H1 (cell line): ENCODE measurements at regions of chr3 and their contacts with region 1.

Region 1: DNA sequence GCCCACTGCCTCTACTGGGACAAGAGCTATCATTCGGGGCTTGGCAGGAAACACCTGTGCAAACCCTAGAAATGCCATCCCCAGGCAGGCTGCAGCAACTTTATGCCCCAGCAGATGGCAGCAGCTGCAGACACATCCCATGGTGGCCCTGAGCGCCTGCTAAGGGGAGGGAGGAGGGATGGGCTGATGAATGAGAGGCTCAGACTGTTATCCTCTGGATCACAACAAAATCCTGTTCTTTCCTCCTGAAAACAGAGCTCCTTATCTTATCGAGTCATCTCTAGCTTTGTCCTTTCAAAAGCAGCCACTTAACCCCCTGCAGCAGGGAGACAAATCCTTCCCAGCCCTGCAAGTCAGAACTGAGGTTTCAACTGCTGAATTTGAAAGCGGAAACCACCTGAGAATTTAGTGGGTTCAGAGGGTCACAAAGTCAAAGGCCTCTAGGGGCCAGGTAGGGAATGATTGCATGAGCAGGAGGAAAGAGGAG is 90.6 kb upstream of the PROK2 start:
- DNase-seq: peak; percentile 88 to 94
- H3K4me3 ChIP-seq: no peak overlapping the region
- H3K27ac ChIP-seq: no peak overlapping the region
- H3K4me1 ChIP-seq: peaks cover 1 to 13% (median 3%) of the 10 kb centered on the region in 4 experiments; a peak in 5 of 7 replicates
- H3K27me3 ChIP-seq: no peaks in the 10 kb centered on the region
- CTCF ChIP-seq: peak; percentile 82 to 96 (median 96)
- EP300 ChIP-seq: no peak; a peak in 1 of 3 replicates
- POLR2A ChIP-seq: no peak
- RAD21 ChIP-seq: peak; percentile 90

Region 2: GRCh38 chr3:71725279-71725991 is 150.1 kb before region 1 on chr3 and contains the start of gene EIF4E3:
- CTCF ChIA-PET with region 1: interaction called, 20 read pairs
- POLR2A ChIA-PET with region 1: interaction called, 10 read pairs
- DNase-seq: peak in 1 of 2 experiments; percentile 72
- H3K4me3 ChIP-seq: peak within 1 kb of the TSS; percentile 67 to 84 (median 76)
- H3K27ac ChIP-seq: peak within 1 kb of the TSS; percentile 20; the same call in 1 of the 2 replicates
- H3K4me1 ChIP-seq: peaks cover 8 to 24% (median 10%) of the 10 kb centered on the region in 4 experiments
- H3K27me3 ChIP-seq: peaks cover 3 to 19% (median 16%) of the 10 kb centered on the region in 4 experiments
- CTCF ChIP-seq: no peak
- EP300 ChIP-seq: no peak
- POLR2A ChIP-seq: no peak
- RAD21 ChIP-seq: no peak
- total RNA-seq, gene EIF4E3: 14.3 and 17.0 TPM in 2 replicates

Region 3: GRCh38 chr3:71891483-71891882 is 16.0 kb after region 1 on chr3:
- CTCF ChIA-PET with region 1: interaction called, 23 read pairs
- POLR2A ChIA-PET with region 1: interaction called, 4 read pairs
- DNase-seq: no peak
- H3K4me3 ChIP-seq: no peak overlapping the region
- H3K27ac ChIP-seq: no peak overlapping the region
- H3K4me1 ChIP-seq: peaks cover 3 to 7% (median 5%) of the 10 kb centered on the region in 4 experiments; a peak in 4 of 7 replicates
- H3K27me3 ChIP-seq: no peaks in the 10 kb centered on the region
- CTCF ChIP-seq: no peak
- EP300 ChIP-seq: no peak
- POLR2A ChIP-seq: no peak
- RAD21 ChIP-seq: no peak

Region 4: DNA sequence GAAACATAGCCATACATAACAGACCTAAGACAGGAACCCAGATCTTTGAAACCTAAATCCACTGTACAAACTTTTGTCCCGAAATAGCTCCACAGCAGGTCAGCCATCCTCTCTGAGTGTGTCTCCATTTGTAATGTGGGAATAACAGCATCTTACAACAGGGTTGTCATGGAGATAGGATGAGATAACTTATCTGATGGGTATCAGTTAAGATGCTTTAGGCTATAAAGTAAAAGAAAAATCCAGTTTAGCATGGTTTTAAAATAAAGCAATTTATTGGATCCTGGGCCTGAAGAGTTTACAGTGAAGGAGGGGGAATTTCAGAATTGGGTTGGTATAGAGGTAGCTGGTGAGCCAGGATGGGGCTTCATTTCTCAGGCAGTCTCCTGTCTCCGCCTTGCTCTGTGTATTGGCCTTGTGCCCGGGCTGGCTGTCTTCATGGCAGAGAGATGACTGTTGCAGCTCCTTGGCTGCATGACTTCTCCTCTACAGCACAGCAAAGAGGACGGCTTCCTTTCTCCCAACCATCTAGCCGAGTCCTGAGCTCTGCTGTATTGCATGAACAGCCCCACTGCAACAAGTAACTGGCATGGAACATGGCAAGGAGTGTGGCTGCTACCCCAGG is 41.4 kb after region 1 on chr3:
- CTCF ChIA-PET with region 1: interaction called, 13 read pairs
- POLR2A ChIA-PET with region 1: no interaction called
- DNase-seq: no peak
- H3K4me3 ChIP-seq: no peak overlapping the region
- H3K27ac ChIP-seq: no peak overlapping the region
- H3K4me1 ChIP-seq: no peaks in the 10 kb centered on the region
- H3K27me3 ChIP-seq: no peaks in the 10 kb centered on the region
- CTCF ChIP-seq: no peak
- EP300 ChIP-seq: no peak
- POLR2A ChIP-seq: no peak
- RAD21 ChIP-seq: no peak

Region 5: DNA sequence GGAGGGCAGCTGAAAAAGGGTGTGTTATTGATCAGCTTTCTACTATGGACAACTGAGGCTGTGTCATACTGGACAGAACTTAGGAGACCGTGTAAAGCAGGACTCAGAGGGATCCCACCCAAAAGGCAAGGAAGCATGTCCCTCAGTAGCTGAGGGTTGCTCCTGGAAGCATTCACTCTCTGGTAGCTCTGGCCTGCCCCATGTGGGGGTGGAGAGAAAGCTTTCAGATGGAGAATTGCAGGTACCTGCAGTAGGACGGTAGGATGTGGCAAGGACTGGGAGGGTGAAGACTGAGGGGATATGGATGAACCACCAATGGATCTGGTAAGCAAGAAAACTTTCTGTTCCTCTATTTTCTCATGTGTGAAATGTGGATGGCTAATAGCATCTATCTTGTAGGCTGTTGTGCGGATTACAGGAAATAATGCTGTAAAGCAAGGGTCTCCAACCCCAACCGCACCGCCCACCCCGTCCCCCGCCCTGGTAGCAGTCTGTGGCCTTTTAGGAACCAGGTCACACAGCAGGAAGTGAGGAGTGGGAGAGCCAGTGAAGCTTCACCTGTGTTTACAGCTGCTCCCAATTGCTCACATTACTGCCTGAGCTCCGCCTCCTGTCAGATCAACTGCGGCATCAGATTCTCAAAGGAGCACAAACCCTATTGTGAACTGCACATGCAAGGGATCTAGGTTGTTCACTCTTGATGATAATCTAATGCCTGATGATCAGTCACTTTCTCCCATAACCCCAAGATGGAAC is 67.1 kb after region 1 on chr3:
- CTCF ChIA-PET with region 1: interaction called, 28 read pairs
- POLR2A ChIA-PET with region 1: no interaction called
- DNase-seq: no peak
- H3K4me3 ChIP-seq: no peak overlapping the region
- H3K27ac ChIP-seq: no peak overlapping the region
- H3K4me1 ChIP-seq: peaks cover 0 to 3% (median 1%) of the 10 kb centered on the region in 4 experiments; a peak in 1 of 7 replicates
- H3K27me3 ChIP-seq: peaks cover 0 to 1% (median 0%) of the 10 kb centered on the region in 4 experiments; a peak in 1 of 7 replicates
- CTCF ChIP-seq: peak; percentile 40 to 59 (median 50); a peak in 3 of 4 replicates
- EP300 ChIP-seq: no peak
- POLR2A ChIP-seq: no peak
- RAD21 ChIP-seq: peak; percentile 23 to 56; a peak in 3 of 4 replicates

Region 6: GRCh38 chr3:71955240-71956068 is 80.0 kb after region 1 on chr3:
- CTCF ChIA-PET with region 1: interaction called, 49 read pairs
- POLR2A ChIA-PET with region 1: interaction called, 4 read pairs
- DNase-seq: peak; percentile 38 to 66
- H3K4me3 ChIP-seq: no peak overlapping the region
- H3K27ac ChIP-seq: no peak overlapping the region
- H3K4me1 ChIP-seq: peaks cover 7 to 16% (median 11%) of the 10 kb centered on the region in 4 experiments
- H3K27me3 ChIP-seq: no peaks in the 10 kb centered on the region
- CTCF ChIP-seq: peak; percentile 62 to 81 (median 72)
- EP300 ChIP-seq: no peak
- POLR2A ChIP-seq: no peak
- RAD21 ChIP-seq: peak; percentile 82 to 83

Region 7: DNA sequence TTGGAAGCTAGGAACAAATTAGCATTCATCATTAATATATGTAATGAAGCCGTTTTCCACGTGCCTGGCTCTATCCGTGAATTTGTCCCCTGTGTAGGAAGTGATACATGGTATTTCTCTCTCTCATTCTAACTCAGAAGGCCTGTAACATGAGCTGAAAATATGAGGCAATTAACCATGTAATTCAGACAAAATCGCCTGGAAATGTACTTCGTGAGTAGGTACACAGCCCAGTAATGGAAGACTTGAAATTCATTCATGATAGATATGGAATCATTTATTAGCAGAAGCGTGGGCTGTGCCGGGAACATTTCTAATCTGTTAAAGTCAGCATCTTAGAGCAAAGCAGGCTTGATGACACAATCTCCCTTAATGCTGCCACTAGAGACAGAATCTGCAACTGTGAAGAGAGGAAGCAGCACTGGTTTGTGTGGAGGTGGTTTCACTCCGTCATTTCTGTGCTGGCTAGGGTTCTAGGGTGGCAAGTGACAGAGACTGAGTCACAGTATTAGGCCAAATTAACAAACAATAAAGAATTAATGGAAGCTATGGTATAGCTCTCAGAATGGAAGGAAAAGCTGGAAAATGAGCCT is 134.4 kb after region 1 on chr3:
- CTCF ChIA-PET with region 1: no interaction called
- POLR2A ChIA-PET with region 1: no interaction called
- DNase-seq: no peak
- H3K4me3 ChIP-seq: no peak overlapping the region
- H3K27ac ChIP-seq: no peak overlapping the region
- H3K4me1 ChIP-seq: peaks cover 0 to 3% (median under 1%) of the 10 kb centered on the region in 4 experiments; a peak in 2 of 7 replicates
- H3K27me3 ChIP-seq: no peaks in the 10 kb centered on the region
- CTCF ChIP-seq: no peak
- EP300 ChIP-seq: no peak
- POLR2A ChIP-seq: no peak
- RAD21 ChIP-seq: no peak